Calu3 (cell line): ENCODE measurements at regions of chr16 and their contacts with region 1.

Region 1: GRCh38 chr16:75224306-75225091 is 5.7 kb downstream of the CTRB1 start:
- DNase-seq: no peak
- H3K4me3 Mint-ChIP-seq: no peak overlapping the region
- H3K27ac Mint-ChIP-seq: no peak overlapping the region
- H3K4me1 Mint-ChIP-seq: peaks cover 9% of the 10 kb centered on the region
- H3K27me3 Mint-ChIP-seq: peaks cover 26% of the 10 kb centered on the region
- CTCF ChIP-seq: no peak

Region 2: DNA sequence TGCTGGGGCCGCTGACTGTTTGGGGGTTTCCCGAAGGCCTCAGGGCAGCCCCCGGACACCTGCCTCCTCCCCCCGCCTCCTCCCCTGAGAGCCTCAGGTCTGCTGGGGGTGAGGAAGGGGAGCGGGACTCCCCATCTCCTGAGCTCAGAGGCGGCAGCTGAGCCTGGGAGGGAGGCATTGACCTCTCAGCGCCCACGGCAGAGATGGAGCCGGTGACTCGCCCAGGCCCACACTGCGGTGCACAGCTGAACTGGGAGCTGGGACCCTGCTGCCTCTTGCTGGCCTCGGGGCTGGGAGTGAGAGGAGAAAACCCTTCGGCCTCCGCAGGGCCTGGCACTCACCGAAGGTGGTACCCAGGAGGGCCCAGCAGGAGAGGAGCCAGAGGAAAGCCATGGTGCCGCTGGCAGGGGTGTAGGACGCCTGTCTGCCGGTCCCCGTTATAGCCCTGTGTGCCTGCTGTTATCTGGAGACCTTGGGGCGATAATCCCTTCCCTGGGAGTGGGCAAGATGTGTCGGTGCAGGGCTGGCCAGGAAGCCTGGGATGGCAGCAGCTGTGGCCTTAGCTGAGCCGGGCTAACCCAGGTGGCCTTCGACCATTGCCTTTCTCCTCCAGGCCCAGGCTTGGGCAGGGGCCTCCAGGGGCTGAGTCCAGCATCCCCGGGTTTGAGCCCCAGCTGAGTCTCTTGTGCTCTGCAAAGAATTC is 17.6 kb before region 1 on chr16 and contains the start of gene CTRB2:
- CTCF ChIA-PET with region 1: interaction called, 5 read pairs
- intact Hi-C with region 1: loop called (anchors 2 kb)
- DNase-seq: no peak
- H3K4me3 Mint-ChIP-seq: no peak within 1 kb of the TSS
- H3K27ac Mint-ChIP-seq: no peak within 1 kb of the TSS
- H3K4me1 Mint-ChIP-seq: no peaks in the 10 kb centered on the region
- H3K27me3 Mint-ChIP-seq: no peaks in the 10 kb centered on the region
- CTCF ChIP-seq: no peak
- total RNA-seq, gene CTRB2: 0.76 TPM in 1 of 2 replicates, not detected in the other

Region 3: GRCh38 chr16:75265845-75266701 is 41.6 kb after region 1 on chr16:
- CTCF ChIA-PET with region 1: no interaction called
- intact Hi-C with region 1: no loop called
- DNase-seq: peak; percentile 89
- H3K4me3 Mint-ChIP-seq: peak overlapping the region; percentile 89
- H3K27ac Mint-ChIP-seq: peak overlapping the region; percentile 90
- H3K4me1 Mint-ChIP-seq: peaks cover 53% of the 10 kb centered on the region
- H3K27me3 Mint-ChIP-seq: no peaks in the 10 kb centered on the region
- CTCF ChIP-seq: no peak